ENCODE measurements at regions of chr12 and their contacts with region 1.

Region 1: GRCh38 chr12:111812881-111813741 is 28.9 kb upstream of the MAPKAPK5 start:
- DNase-seq: peak; percentile 83
- ATAC-seq: peak; percentile 94

Region 2: DNA sequence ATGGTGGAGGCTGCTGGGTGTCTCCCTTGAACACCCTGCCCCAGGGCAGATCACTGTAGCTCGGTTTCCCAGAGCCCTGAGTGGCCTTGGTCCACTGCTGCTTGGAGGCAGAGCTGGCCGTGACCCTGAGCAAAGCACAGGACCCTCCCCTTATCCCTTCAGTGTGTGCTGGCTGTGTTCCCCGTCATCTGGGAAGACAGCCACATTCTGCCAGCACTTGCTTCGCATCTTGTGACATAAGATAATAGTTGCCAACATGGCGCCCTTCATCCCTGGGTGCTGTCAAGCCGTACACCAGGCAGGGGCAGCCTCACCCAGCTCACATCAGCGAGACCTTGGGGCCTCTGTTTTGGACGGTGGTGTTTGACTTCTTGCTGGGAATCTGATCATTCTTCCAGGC is 58.4 kb before region 1 on chr12:
- intact Hi-C with region 1: loop called (anchors 2 kb)
- DNase-seq: no peak
- ATAC-seq: no peak

Region 3: DNA sequence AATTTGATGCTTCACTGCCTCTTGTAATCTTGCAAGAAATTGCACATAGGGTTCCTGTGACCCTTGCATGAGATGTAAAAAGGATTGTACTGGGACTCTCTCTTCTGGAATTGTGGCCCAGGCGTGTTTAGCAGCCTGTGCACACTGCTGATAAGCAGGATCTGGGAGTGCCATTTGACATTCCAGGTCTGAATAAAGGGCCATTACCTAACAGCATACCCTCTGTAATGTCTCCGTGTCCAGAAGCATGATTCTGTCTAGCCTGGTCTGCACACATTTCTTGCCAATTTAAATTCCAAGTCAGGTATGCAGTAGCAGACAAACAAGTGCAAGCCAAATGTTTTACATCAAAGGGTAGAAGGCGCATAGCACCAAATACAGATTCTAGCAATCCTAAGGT is 10.8 kb after region 1 on chr12:
- intact Hi-C with region 1: no loop called
- DNase-seq: no peak
- ATAC-seq: no peak

Measured in sciatic nerve (tissue), 2 donors.